AG04450 (cell line): ENCODE measurements at regions of chr17 and their contacts with region 1.

Region 1: GRCh38 chr17:1716076-1716995 is 6.2 kb upstream of the TLCD2 start:
- DNase-seq: peak; percentile 100
- H3K4me3 ChIP-seq: peak overlapping the region; percentile 92
- H3K27ac ChIP-seq: peak overlapping the region; percentile 100
- H3K27me3 ChIP-seq: no peaks in the 10 kb centered on the region
- CTCF ChIP-seq: peak; percentile 19; the same call in 1 of the 2 replicates

Region 2: DNA sequence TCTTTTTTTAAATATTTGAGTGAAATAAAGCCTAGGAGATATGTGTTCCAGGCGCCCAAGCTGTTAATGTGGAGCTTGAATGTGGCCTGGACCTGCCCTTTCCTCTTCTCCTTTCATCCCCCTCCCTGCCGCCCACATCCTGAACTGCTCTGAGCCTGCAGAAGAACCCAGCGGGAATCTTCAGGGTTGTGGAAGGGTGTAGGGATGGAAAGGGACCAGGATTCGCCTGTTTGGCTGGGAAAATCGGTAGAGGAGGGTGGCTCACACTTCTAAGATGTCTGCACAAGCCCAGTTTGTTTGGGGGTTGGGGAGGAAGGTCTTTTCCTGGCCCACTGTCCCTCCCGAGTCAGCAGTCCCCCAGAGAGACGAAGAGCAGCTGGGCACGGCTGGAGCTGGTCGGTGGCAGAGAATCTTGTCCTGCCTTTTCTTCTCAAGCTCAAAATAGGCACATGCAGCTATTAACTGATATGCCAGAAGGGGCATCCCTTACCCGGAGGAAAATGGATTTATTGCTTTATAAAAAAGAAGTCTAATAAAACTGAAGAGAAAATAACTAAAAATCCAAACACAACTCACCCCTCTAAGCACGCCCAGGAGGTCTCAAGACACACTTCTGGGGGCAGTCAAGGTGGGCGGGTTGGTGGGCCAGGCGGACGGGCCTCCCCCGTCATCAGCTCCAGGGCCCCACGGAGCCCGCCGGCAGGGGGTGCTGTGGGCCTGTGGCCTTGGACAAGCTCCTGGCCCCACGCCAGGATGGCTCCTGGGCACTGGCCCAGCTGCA is 142.2 kb before region 1 on chr17:
- CTCF ChIA-PET with region 1: interaction called, 8 read pairs
- POLR2A ChIA-PET with region 1: interaction called, 12 read pairs
- DNase-seq: peak; percentile 55
- H3K4me3 ChIP-seq: no peak overlapping the region
- H3K27ac ChIP-seq: no peak overlapping the region
- H3K27me3 ChIP-seq: peaks cover 2% of the 10 kb centered on the region
- CTCF ChIP-seq: peak; percentile 92

Region 3: DNA sequence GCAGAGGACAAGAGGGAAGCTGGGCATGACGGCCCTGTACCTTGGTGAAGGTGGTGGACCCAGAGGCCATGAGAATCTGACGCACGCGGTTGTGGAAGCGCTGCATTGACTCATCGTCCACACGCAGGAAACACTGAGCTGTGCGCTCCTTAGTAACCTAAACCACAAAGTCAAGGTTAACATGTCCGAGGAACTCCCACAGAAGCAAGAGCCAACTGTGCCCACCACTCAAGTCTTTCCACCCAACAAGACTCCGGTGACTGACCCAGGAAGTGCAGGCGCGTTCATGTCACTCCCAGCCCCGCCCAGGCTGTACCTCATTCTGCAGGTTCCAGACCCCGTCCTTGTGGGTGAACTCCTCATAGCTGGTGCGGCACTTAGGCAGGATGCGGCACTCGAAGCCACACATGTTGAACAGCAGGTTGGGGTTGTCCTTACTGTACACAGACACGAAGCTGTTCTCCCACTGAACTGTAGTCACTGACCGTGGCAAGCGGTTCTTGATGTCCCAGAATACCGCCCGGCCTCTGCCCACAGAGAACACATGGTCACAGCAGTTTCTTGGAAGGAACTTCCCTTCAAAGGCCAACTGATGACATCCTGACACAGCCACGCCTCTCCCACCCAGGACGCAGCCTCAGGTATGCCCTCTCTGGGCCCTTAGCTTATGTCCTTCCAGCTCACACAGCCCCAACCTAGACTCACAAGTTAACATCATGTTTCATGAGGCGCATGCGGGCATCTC is 43.1 kb before region 1 on chr17:
- CTCF ChIA-PET with region 1: interaction called, 6 read pairs
- POLR2A ChIA-PET with region 1: interaction called, 52 read pairs
- DNase-seq: no peak
- H3K4me3 ChIP-seq: no peak overlapping the region
- H3K27ac ChIP-seq: peak overlapping the region; percentile 11
- H3K27me3 ChIP-seq: no peaks in the 10 kb centered on the region
- CTCF ChIP-seq: no peak

Region 4: GRCh38 chr17:1730328-1731193 is 14.2 kb after region 1 on chr17:
- CTCF ChIA-PET with region 1: interaction called, 6 read pairs
- POLR2A ChIA-PET with region 1: interaction called, 14 read pairs
- DNase-seq: no peak
- H3K4me3 ChIP-seq: no peak overlapping the region
- H3K27ac ChIP-seq: peak overlapping the region; percentile 11
- H3K27me3 ChIP-seq: no peaks in the 10 kb centered on the region
- CTCF ChIP-seq: no peak

Region 5: GRCh38 chr17:1783834-1784611 is 67.7 kb after region 1 on chr17:
- CTCF ChIA-PET with region 1: interaction called, 89 read pairs
- POLR2A ChIA-PET with region 1: interaction called, 37 read pairs
- DNase-seq: peak; percentile 78
- H3K4me3 ChIP-seq: no peak overlapping the region
- H3K27ac ChIP-seq: peak overlapping the region; percentile 62
- H3K27me3 ChIP-seq: no peaks in the 10 kb centered on the region
- CTCF ChIP-seq: peak; percentile 90